ENCODE measurements at regions of chr6 and their contacts with region 1.

Region 1: DNA sequence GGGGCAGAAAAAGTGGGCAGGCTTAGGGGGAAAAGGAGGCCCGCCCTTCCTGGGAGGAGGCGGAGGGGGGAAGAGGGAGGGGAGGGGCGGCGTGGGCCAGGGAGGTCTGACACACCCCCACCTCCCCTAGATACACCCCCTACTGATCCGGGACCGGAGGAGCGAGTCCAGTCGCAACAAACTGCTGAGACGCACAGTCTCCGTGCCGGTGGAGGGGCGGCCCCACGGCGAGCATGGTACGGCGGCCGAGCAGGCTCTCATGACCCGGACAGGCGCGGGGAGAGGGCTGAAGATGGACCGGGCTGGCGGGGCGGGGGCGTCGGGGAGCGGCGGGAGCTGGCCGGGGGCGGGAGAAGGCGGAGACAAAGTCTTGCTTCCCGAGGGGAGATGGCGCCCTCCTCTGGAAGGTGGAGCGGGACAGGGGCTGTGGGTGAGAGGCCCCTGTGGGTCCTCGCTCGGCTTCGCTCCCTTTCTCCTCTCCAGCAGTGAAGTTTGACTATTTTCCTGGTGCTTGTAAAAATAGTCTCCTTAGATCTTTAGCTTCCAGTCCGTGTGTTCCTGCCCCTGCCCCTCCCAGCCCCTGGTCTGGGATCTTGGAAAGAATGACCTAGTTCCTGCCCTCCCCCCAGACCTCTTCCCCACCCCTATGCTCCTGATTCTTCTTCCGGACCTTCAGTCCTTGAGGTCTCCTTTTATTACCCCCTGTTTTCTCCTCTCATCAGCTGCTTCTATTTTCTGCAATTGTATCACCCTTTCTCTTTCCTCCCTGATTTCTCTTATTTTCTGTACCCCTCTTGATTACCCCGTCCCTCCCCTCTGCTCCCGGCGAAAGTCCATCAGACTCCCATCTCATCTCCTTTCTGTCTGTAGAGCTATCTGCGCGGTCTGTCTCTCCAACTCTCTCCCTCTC is 6.1 kb downstream of the SYNGAP1 start:
- DNase-seq: peak; percentile 85
- H3K4me3 ChIP-seq: peak overlapping the region; percentile 48 to 53
- H3K27ac ChIP-seq: peak overlapping the region; percentile 94 to 95
- H3K4me1 ChIP-seq: peaks cover 4% of the 10 kb centered on the region
- H3K27me3 ChIP-seq: no peaks in the 10 kb centered on the region
- CTCF ChIP-seq: peak; percentile 49 to 70 (median 62)
- POLR2A ChIP-seq: no peak

Region 2: GRCh38 chr6:33391278-33391921 is 34.5 kb before region 1 on chr6 and contains the start of gene KIFC1:
- intact Hi-C with region 1: loop called (anchors 5 kb)
- DNase-seq: peak; percentile 99
- H3K4me3 ChIP-seq: peak within 1 kb of the TSS; percentile 25 to 41
- H3K27ac ChIP-seq: peak within 1 kb of the TSS; percentile 92
- H3K4me1 ChIP-seq: no peaks in the 10 kb centered on the region
- H3K27me3 ChIP-seq: no peaks in the 10 kb centered on the region
- CTCF ChIP-seq: peak; percentile 97 to 99 (median 99)
- POLR2A ChIP-seq: peak; percentile 40
- total RNA-seq, gene KIFC1: 5.8 to 6.5 TPM

Region 3: GRCh38 chr6:33851959-33852358 is 426.0 kb after region 1 on chr6:
- intact Hi-C with region 1: no loop called
- DNase-seq: no peak
- H3K4me3 ChIP-seq: no peak overlapping the region
- H3K27ac ChIP-seq: no peak overlapping the region
- H3K4me1 ChIP-seq: no peaks in the 10 kb centered on the region
- H3K27me3 ChIP-seq: no peaks in the 10 kb centered on the region
- CTCF ChIP-seq: peak in 2 of 4 experiments; percentile 38 to 41
- POLR2A ChIP-seq: no peak